ENCODE measurements at regions of chr10 and their contacts with region 1.

Region 1: GRCh38 chr10:22531441-22531840 is 182.9 kb downstream of the PIP4K2A start:
- DNase-seq: no peak
- ATAC-seq: no peak
- H3K4me3 ChIP-seq: no peak overlapping the region
- H3K4me3 Mint-ChIP-seq: no peak overlapping the region
- H3K27ac ChIP-seq: no peak overlapping the region
- H3K27ac Mint-ChIP-seq: no peak overlapping the region
- H3K4me1 ChIP-seq: no peaks in the 10 kb centered on the region
- H3K4me1 Mint-ChIP-seq: no peaks in the 10 kb centered on the region
- H3K27me3 ChIP-seq: peaks cover 0 to 4% of the 10 kb centered on the region in 2 experiments
- H3K27me3 Mint-ChIP-seq: no peaks in the 10 kb centered on the region

Region 2: DNA sequence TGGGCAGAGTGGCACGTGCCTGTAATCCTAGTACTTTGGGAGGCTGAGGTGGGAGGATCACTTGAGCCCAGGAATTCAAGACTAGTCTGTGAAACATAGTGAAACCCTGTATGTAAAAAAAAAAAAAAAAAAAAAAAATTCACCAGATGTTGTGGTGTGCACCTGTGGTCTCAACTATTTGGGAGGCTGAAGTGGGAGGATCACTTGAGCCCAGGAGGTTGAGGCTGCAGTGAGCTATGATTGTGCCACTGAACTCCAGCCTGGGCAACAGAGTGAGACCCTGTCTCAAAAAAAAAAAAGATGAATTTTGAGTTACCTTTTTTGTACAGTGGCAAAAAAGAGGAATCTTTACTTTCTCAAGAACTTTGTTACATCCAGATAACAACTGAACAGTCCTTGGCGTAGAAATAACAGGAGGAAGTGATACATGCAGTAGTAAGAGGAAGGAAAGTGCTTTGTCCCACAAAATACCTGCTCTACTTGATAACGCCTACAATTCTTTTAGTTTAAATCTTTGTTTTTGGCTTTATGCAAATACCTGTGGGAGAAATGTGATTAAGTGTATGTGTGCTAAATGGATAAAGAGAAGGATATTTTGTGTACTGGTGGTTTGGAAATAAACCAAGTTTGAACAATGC is 156.8 kb before region 1 on chr10:
- CTCF ChIA-PET with region 1: no interaction called
- POLR2A ChIA-PET with region 1: interaction called in 1 of 2 experiments, 11 read pairs
- DNase-seq: no peak
- ATAC-seq: no peak
- H3K4me3 ChIP-seq: no peak overlapping the region
- H3K4me3 Mint-ChIP-seq: no peak overlapping the region
- H3K27ac ChIP-seq: no peak overlapping the region
- H3K27ac Mint-ChIP-seq: no peak overlapping the region
- H3K4me1 ChIP-seq: peaks cover 0 to 9% of the 10 kb centered on the region in 2 experiments
- H3K4me1 Mint-ChIP-seq: peaks cover 0 to 9% (median 6%) of the 10 kb centered on the region in 3 donors
- H3K27me3 ChIP-seq: no peaks in the 10 kb centered on the region
- H3K27me3 Mint-ChIP-seq: peaks cover 0 to 3% of the 10 kb centered on the region in 2 donors